Colonic mucosa (tissue), 4 donors: ENCODE measurements at regions of chr1 and their contacts with region 1.

Region 1: GRCh38 chr1:213564215-213564659 is 423.5 kb upstream of the PROX1 start:
- DNase-seq: peak; percentile 56
- H3K4me3 ChIP-seq: no peak overlapping the region
- H3K27ac ChIP-seq: no peak overlapping the region
- H3K4me1 ChIP-seq: no peaks in the 10 kb centered on the region
- H3K27me3 ChIP-seq: no peaks in the 10 kb centered on the region
- CTCF ChIP-seq: peak; percentile 46

Region 2: DNA sequence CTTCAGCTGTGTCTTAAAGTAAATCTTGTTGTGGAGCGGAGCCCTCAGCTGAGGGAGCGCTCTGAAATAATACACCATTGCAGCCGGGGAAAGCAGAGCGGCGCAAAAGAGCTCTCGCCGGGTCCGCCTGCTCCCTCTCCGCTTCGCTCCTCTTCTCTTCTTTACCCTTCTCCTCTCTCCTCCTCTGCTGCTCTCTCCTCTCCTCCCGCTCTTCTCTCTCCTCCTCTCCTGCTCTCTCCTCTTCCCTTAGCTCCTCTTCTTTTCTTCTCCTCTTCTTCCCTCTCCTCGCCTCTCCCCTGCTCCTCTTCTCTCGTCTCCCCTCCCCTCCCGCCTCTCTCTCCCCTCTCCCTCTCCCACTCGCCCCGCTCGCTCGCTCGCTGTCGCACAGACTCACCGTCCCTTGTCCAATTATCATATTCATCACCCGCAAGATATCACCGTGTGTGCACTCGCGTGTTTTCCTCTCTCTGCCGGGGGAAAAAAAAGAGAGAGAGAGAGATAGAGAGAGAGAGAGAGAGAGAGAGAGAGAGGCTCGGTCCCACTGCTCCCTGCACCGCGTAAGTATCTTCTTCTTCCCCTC is 423.8 kb after region 1 on chr1 and contains the start of gene PROX1:
- intact Hi-C with region 1: loop called (anchors 5 kb)
- DNase-seq: no peak
- H3K4me3 ChIP-seq: peak within 1 kb of the TSS; percentile 43
- H3K27ac ChIP-seq: peak within 1 kb of the TSS; percentile 74
- H3K4me1 ChIP-seq: peaks cover 7% of the 10 kb centered on the region
- H3K27me3 ChIP-seq: peaks cover 22% of the 10 kb centered on the region
- CTCF ChIP-seq: no peak
- total RNA-seq, gene PROX1: 11.6 to 14.7 TPM